Gastrocnemius medialis (tissue), 4 donors: ENCODE measurements at regions of chr10 and their contacts with region 1.

Region 1: DNA sequence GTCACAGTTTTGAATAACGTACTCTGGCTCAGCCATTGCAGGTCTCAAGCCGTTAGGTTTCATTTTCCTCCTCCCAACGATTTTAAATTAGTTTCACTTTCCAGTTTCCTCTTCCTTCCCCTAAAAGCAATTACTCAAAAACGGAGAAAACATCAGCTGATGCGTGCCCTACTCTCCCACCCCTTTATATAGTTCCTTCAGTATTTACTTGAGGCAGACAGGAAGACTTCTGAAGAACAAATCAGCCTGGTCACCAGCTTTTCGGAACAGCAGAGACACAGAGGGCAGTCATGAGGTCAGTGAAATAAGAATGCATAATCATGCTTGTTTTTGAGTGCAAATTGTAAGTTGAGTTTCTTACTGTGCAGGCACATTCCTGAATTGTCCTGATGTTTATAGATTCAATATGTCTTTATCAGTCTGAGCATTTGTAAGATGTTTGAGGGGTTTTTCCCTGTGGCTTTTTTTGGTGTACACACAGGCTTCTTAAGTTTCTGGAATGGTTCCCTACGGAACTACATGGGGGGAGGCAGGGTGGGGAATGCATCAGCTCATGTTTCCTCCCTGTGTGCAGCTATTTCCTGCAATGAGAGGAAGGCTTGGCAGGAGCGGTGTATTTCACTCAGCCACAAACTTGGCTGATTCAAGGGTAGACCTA is at the start of gene IFIT3:
- DNase-seq: peak; percentile 61 to 69
- ATAC-seq: peak; percentile 88 to 91
- H3K4me3 ChIP-seq: peak within 1 kb of the TSS; percentile 45 to 55 (median 50)
- H3K27ac ChIP-seq: peak within 1 kb of the TSS; percentile 73 to 82 (median 80)
- H3K4me1 ChIP-seq: peaks cover 20 to 32% of the 10 kb centered on the region in 2 donors
- H3K27me3 ChIP-seq: no peaks in the 10 kb centered on the region
- CTCF ChIP-seq: no peak
- POLR2A ChIP-seq: peak in 1 of 2 donors; percentile 30
- total RNA-seq, gene IFIT3: 2.2 to 8.9 (median 3.7) TPM

Region 2: DNA sequence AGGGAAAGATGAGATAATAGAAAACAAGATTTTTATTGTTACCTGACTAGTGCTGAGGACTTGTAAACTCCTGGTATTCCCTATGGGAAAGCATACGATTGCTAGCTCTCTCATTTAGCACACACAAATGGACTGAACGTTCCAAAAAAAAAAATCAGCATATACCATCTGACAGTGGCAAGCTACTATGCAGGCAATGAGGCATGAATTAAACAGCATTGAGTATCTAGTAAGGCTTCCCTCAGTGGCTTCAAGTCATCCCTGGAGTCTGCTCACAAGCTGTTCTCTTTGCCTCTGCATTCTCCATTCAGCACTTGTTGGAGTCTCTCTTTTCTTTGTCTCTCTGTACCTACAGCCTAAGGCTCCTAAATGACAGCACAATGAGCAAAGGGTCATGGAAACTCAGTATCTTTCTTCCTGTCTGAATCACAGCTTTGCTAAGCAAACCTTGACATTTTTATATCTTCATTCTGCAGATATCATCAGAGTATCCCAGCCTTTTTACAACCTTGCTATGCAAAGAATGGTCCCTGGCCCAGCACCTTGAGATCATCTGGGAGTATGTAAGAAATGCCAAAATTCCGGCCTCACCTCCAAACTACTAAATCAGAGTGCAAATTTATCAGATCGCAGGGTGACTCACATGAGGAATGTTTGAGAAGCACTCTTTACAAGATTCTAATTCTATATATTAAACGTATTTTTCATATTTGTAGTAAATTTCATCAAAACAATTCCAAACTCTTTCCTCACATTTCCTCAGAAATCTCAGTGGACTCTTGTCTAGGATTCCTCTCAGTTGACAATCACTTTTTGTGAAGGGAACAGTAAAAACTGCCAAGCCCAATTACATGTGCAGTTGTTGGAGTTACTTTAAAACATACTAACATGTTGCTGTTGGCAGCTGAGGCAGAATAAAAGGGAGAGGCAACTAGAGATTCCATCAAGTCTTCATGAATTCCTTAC is 65.5 kb before region 1 on chr10:
- in situ Hi-C with region 1: no loop called
- intact Hi-C with region 1: loop called (anchors 1 kb)
- DNase-seq: no peak
- ATAC-seq: no peak
- H3K4me3 ChIP-seq: no peak overlapping the region
- H3K27ac ChIP-seq: no peak overlapping the region
- H3K4me1 ChIP-seq: peaks cover 3 to 10% of the 10 kb centered on the region in 2 donors
- H3K27me3 ChIP-seq: no peaks in the 10 kb centered on the region
- CTCF ChIP-seq: no peak
- POLR2A ChIP-seq: no peak

Region 3: DNA sequence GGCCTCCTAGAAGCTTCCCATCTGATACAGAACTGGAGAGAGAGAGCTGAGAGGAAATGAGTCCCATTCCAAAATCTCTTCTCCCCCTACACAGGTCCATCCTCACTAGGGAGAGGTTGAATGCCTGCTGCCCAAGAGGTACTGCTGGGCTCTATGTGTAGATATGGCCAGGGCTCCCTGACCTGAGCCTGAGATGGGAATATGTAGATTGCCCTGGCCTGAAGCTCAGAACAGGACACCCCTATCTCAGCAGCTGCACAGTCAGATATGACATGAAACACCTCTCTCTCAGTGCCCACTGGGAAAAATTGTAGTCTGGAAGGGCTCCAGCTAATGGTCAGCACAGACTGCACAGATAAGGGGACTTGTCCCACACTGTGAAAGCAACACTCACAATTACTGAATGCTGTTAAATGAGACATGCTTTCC is 46.8 kb after region 1 on chr10:
- in situ Hi-C with region 1: no loop called
- intact Hi-C with region 1: loop called (anchors 5 kb)
- DNase-seq: no peak
- ATAC-seq: peak in 1 of 2 donors; percentile 20
- H3K4me3 ChIP-seq: no peak overlapping the region
- H3K27ac ChIP-seq: peak overlapping the region; percentile 76 to 91 (median 85)
- H3K4me1 ChIP-seq: peaks cover 18 to 19% of the 10 kb centered on the region in 2 donors
- H3K27me3 ChIP-seq: no peaks in the 10 kb centered on the region
- CTCF ChIP-seq: no peak
- POLR2A ChIP-seq: no peak

Region 4: GRCh38 chr10:89701238-89702120 is 373.6 kb after region 1 on chr10 and contains the start of gene KIF20B:
- in situ Hi-C with region 1: no loop called
- intact Hi-C with region 1: no loop called
- DNase-seq: peak; percentile 93 to 94
- ATAC-seq: peak; percentile 99 to 100
- H3K4me3 ChIP-seq: peak within 1 kb of the TSS; percentile 73 to 89 (median 82)
- H3K27ac ChIP-seq: peak within 1 kb of the TSS; percentile 89 to 93 (median 91)
- H3K4me1 ChIP-seq: peaks cover 9 to 21% of the 10 kb centered on the region in 2 donors
- H3K27me3 ChIP-seq: no peaks in the 10 kb centered on the region
- CTCF ChIP-seq: peak in 4 of 5 experiments; percentile 55 to 75 (median 66)
- POLR2A ChIP-seq: peak; percentile 34 to 57
- total RNA-seq, gene KIF20B: 0.65 to 1.0 (median 0.86) TPM